ENCODE measurements at regions of chr17 and their contacts with region 1.

Region 1: DNA sequence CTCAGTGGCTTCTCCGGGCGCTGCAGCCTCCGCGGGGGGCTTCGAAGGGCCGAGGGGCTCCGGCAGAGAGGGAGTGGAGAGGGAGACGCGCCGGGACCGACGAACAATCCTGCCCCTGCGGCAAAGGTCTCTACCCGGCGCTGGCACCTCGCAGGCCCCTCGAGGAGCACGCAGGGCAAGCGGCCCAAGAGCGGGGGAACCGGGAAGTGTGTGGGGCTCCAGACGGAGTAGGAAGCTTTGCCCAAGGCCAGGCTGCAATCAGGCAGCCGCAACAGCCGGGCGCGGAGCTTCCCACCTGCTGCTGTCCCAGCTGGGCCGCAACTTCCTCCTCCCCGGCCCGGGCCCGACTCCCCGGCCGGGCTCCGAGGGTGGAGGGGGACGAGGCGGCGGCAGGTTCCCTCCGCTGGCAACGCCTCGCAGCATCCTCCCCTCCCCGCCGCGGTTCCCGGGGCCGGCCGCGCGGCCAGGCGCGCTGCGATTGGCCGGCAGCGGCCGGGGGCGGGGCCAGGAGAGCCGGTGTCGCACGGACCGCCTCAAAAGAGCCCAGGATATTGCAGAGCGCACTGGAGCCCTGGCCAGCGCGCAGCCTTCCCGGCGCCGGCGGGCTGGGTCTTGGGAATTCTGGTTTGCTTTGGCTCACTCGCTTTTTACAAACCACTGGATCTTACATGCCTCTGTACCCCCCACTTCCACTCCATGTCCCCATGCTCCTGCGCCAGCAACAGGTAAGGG is at the start of gene KCNJ2:
- DNase-seq: peak; percentile 94
- ATAC-seq: peak; percentile 91
- H3K4me3 ChIP-seq: peak within 1 kb of the TSS; percentile 72
- H3K27ac ChIP-seq: no peak within 1 kb of the TSS
- H3K4me1 ChIP-seq: peaks cover 11% of the 10 kb centered on the region
- H3K27me3 ChIP-seq: peaks cover 34% of the 10 kb centered on the region
- CTCF ChIP-seq: no peak
- total RNA-seq, gene KCNJ2: 0.36 TPM in 1 of 2 replicates, not detected in the other

Region 2: DNA sequence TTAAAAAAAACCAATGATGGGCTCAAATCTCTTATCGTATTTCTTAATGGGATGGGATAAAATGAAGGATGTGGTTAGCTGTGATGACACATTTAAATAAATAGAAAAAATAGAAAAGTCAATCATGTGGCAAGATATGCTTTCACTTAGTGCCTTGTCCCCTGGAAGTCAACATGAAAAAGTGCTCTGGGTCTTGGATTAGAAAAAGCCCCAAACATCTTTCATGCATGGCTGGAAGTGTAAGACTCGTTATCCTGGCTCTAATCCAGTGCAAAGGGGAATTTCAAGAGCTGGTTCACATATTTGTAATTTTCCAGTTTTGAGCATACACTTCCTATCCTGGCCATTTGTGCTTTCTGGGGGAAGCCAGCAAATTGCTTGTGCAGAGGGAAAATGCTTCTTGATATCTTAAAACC is 593.8 kb before region 1 on chr17:
- CTCF ChIA-PET with region 1: interaction called, 3 read pairs
- POLR2A ChIA-PET with region 1: no interaction called
- intact Hi-C with region 1: loop called (anchors 2 kb)
- DNase-seq: peak; percentile 97
- ATAC-seq: peak; percentile 87
- H3K4me3 ChIP-seq: no peak overlapping the region; the same call in 1 of the 2 replicates
- H3K27ac ChIP-seq: peak overlapping the region; percentile 58
- H3K4me1 ChIP-seq: peaks cover 25% of the 10 kb centered on the region
- H3K27me3 ChIP-seq: no peaks in the 10 kb centered on the region
- CTCF ChIP-seq: no peak

Region 3: DNA sequence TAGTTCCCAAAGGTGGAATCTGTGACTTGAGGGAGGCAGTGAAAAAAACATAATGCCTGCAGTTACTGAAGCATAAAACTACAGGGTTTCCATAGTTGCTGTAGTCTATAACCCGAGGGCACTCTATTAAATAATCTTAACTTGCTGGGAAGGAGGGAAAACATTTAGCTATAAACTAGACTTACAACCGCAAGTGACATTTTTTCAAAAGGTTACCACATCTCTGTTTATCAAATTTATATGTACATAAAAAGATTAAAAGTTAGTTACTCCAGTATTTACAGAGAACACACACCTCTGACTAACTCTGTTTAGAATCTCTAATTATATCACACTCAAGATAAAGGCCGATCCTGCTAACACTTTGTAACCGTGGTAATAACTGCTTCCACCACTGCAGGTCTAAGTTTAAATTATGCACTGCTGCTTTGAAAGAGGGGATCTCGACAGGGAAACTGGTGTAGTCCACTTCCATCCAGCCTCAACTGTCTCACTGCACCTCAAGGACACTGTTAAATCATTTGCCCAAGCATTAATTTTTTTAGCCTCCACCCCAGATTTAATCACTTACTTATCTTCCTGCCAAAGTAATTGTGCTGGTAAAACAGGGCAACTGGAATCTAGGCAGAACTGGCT is 79.5 kb before region 1 on chr17:
- CTCF ChIA-PET with region 1: no interaction called
- POLR2A ChIA-PET with region 1: no interaction called
- intact Hi-C with region 1: loop called (anchors 2 kb)
- DNase-seq: peak; percentile 62
- ATAC-seq: peak; percentile 67
- H3K4me3 ChIP-seq: no peak overlapping the region
- H3K27ac ChIP-seq: no peak overlapping the region
- H3K4me1 ChIP-seq: peaks cover 22% of the 10 kb centered on the region
- H3K27me3 ChIP-seq: no peaks in the 10 kb centered on the region
- CTCF ChIP-seq: no peak

Region 4: GRCh38 chr17:70344386-70345060 is 175.4 kb after region 1 on chr17:
- CTCF ChIA-PET with region 1: no interaction called
- POLR2A ChIA-PET with region 1: no interaction called
- intact Hi-C with region 1: no loop called
- DNase-seq: peak; percentile 26
- ATAC-seq: peak; percentile 42
- H3K4me3 ChIP-seq: peak overlapping the region; percentile 27; the same call in 1 of the 2 replicates
- H3K27ac ChIP-seq: no peak overlapping the region
- H3K4me1 ChIP-seq: 0 out of 2 replicates have a peak, but pooled peaks cover 8% of the 10 kb centered on the region
- H3K27me3 ChIP-seq: peaks cover 9% of the 10 kb centered on the region; the same call in 1 of the 2 replicates
- CTCF ChIP-seq: no peak

Region 5: GRCh38 chr17:70552230-70552981 is 383.3 kb after region 1 on chr17:
- CTCF ChIA-PET with region 1: interaction called, 5 read pairs
- POLR2A ChIA-PET with region 1: no interaction called
- intact Hi-C with region 1: loop called (anchors 5 kb)
- DNase-seq: peak; percentile 80
- ATAC-seq: peak; percentile 78
- H3K4me3 ChIP-seq: no peak overlapping the region
- H3K27ac ChIP-seq: no peak overlapping the region
- H3K4me1 ChIP-seq: no peaks in the 10 kb centered on the region
- H3K27me3 ChIP-seq: no peaks in the 10 kb centered on the region
- CTCF ChIP-seq: peak; percentile 81